ENCODE measurements at regions of chr17 and their contacts with region 1.

Region 1: DNA sequence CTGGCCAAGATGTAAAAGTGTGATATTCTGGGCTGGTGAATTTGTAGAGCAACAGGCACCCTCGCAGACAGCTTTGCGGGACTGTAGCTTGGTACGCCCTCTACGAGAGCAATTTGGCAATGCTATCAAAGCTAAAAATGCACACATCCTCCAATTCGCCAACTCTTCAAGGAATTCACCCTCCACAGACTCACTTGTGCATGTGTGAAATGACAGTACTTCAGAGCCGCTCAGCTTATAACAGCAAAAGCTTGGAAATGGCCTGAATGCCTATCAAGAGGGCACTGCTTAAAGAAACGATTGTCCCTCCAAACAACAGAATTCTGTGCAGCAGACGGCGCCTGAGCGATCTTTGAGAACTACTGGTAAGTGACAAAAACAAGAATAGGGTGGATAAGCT is 130.8 kb downstream of the SDK2 start:
- DNase-seq: no peak
- H3K4me3 Mint-ChIP-seq: no peak overlapping the region
- H3K27ac Mint-ChIP-seq: no peak overlapping the region
- H3K4me1 Mint-ChIP-seq: no peaks in the 10 kb centered on the region
- H3K27me3 Mint-ChIP-seq: peaks cover 94% of the 10 kb centered on the region
- CTCF ChIP-seq: no peak

Region 2: DNA sequence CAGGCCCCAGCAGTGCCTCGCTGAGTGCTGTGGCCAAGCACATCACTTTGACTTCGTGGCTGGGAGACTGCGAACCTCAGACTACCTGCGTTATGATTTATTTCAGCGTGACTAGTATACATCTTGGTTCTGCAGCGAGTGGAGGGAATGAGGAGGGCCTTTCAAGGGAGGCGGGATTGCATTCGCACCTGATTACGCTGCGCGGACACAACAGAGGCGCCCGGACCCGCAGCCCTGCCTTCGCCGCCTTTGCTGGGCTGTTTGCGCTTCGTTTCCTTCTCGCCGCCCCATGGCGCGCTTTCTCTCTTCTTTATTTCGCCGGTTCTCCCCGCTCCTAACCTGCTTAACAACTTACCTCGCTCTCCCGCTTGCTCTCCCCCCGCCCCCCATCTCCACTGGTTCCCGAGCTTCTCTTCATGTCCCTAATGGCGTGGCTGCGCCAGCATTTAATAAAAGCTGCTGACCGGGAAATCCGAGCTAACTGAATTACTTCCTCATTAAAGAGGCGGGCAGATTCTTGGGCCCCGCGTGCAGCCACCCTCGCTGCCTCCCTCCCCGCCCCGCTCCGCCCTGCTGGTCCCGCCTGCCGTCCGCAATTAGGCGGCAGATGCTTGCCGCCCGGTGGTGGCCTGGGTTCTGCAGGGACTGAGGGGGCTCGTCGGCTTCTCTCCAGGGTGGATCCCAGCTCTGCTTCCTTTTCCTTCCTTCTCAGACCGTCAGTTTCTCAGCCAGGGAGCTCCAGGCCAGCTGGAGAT is 388.4 kb after region 1 on chr17:
- CTCF ChIA-PET with region 1: interaction called, 10 read pairs
- intact Hi-C with region 1: no loop called
- DNase-seq: peak; percentile 21
- H3K4me3 Mint-ChIP-seq: peak overlapping the region; percentile 43
- H3K27ac Mint-ChIP-seq: no peak overlapping the region
- H3K4me1 Mint-ChIP-seq: no peaks in the 10 kb centered on the region
- H3K27me3 Mint-ChIP-seq: peaks cover 65% of the 10 kb centered on the region
- CTCF ChIP-seq: no peak